ENCODE measurements at regions of chr13 and their contacts with region 1.

Region 1: GRCh38 chr13:28611654-28612131 is 47.2 kb upstream of the POMP start:
- DNase-seq: peak; percentile 81
- H3K4me3 Mint-ChIP-seq: peak overlapping the region; percentile 53
- H3K27ac Mint-ChIP-seq: peak overlapping the region; percentile 68
- H3K4me1 Mint-ChIP-seq: peaks cover 28% of the 10 kb centered on the region
- H3K27me3 Mint-ChIP-seq: no peaks in the 10 kb centered on the region

Region 2: GRCh38 chr13:28540612-28541011 is 71.1 kb before region 1 on chr13:
- intact Hi-C with region 1: loop called (anchors 1 kb)
- DNase-seq: no peak
- H3K4me3 Mint-ChIP-seq: peak overlapping the region; percentile 16
- H3K27ac Mint-ChIP-seq: peak overlapping the region; percentile 90
- H3K4me1 Mint-ChIP-seq: peaks cover 25% of the 10 kb centered on the region
- H3K27me3 Mint-ChIP-seq: no peaks in the 10 kb centered on the region

Region 3: GRCh38 chr13:28574617-28575142 is 37.0 kb before region 1 on chr13:
- intact Hi-C with region 1: loop called (anchors 2 kb)
- DNase-seq: peak; percentile 72
- H3K4me3 Mint-ChIP-seq: no peak overlapping the region
- H3K27ac Mint-ChIP-seq: peak overlapping the region; percentile 90
- H3K4me1 Mint-ChIP-seq: peaks cover 14% of the 10 kb centered on the region
- H3K27me3 Mint-ChIP-seq: peaks cover 5% of the 10 kb centered on the region